ENCODE measurements at regions of chr14 and their contacts with region 1.

Region 1: GRCh38 chr14:89416002-89416995 is 734 bp downstream of the FOXN3 start:
- DNase-seq: peak; percentile 99
- H3K4me3 ChIP-seq: peak overlapping the region; percentile 88
- H3K4me3 Mint-ChIP-seq: peak overlapping the region; percentile 88
- H3K27ac Mint-ChIP-seq: peak overlapping the region; percentile 83
- H3K4me1 ChIP-seq: no peaks in the 10 kb centered on the region; the same call in 1 of the 2 replicates
- H3K4me1 Mint-ChIP-seq: peaks cover 18% of the 10 kb centered on the region
- H3K27me3 ChIP-seq: no peaks in the 10 kb centered on the region
- H3K27me3 Mint-ChIP-seq: no peaks in the 10 kb centered on the region
- CTCF ChIP-seq: no peak

Region 2: DNA sequence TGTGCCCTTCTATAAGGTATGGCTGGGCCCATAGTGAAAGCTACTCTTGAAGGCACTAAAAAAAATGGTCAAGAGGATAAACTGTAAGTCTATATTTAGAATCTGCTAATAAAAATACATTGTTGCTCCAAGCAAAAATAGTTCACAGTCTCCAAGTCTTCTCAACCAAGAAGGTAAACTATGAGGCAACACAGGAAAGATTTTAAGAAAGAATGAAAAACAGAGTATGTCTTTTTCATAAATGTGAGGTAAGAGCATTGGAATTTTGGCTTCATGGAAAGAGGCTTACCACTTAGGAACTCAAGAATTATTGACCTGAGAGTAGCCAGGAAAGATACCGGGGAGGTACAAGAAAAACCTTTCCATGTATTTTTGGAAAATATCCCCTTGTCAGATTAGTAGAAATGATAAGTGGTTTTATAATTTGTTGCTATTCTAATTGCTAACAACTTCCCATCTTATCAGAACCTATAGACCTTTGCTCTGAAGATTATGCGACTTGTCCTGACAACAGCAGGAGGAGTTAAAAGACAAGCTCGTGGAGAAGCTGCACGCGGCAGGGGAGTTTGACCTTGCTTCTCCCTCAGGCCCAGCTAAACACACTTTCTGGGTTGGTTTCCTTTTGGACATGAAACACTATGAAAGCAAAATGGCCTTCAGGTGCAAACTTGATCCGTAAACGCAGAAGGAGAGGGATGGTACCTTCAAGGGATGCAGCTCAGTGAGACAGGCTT is 237.3 kb before region 1 on chr14:
- CTCF ChIA-PET with region 1: no interaction called
- POLR2A ChIA-PET with region 1: interaction called, 3 read pairs
- intact Hi-C with region 1: loop called (anchors 1 kb)
- DNase-seq: no peak
- H3K4me3 ChIP-seq: no peak overlapping the region
- H3K4me3 Mint-ChIP-seq: no peak overlapping the region
- H3K27ac Mint-ChIP-seq: no peak overlapping the region
- H3K4me1 ChIP-seq: peaks cover 5% of the 10 kb centered on the region
- H3K4me1 Mint-ChIP-seq: no peaks in the 10 kb centered on the region
- H3K27me3 ChIP-seq: no peaks in the 10 kb centered on the region
- H3K27me3 Mint-ChIP-seq: no peaks in the 10 kb centered on the region
- CTCF ChIP-seq: no peak

Region 3: DNA sequence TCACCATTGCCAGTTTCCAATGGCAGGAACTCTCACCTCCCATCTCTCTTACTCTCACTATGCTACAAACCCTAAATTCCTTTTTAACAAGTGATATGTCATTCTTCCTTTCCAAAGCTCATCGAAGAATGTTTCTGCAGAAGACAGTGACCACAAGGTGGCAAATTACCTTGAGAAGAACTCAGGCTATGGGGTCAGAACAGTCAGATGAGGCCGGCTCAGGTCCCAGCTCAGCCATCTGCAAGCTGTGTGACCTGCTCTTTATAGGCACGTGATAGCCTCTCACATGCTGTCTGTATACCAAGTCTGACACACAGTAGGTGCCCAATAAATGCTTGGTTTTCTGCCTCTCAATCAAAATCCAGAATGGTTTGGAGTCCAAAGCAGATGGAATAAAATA is 80.0 kb before region 1 on chr14:
- CTCF ChIA-PET with region 1: interaction called, 3 read pairs
- POLR2A ChIA-PET with region 1: interaction called, 3 read pairs
- intact Hi-C with region 1: loop called (anchors 1 kb)
- DNase-seq: peak; percentile 39 to 46
- H3K4me3 ChIP-seq: no peak overlapping the region
- H3K4me3 Mint-ChIP-seq: no peak overlapping the region
- H3K27ac Mint-ChIP-seq: peak overlapping the region; percentile 79
- H3K4me1 ChIP-seq: peaks cover 47% of the 10 kb centered on the region
- H3K4me1 Mint-ChIP-seq: peaks cover 30% of the 10 kb centered on the region
- H3K27me3 ChIP-seq: no peaks in the 10 kb centered on the region
- H3K27me3 Mint-ChIP-seq: no peaks in the 10 kb centered on the region
- CTCF ChIP-seq: peak; percentile 19 to 20

Region 4: DNA sequence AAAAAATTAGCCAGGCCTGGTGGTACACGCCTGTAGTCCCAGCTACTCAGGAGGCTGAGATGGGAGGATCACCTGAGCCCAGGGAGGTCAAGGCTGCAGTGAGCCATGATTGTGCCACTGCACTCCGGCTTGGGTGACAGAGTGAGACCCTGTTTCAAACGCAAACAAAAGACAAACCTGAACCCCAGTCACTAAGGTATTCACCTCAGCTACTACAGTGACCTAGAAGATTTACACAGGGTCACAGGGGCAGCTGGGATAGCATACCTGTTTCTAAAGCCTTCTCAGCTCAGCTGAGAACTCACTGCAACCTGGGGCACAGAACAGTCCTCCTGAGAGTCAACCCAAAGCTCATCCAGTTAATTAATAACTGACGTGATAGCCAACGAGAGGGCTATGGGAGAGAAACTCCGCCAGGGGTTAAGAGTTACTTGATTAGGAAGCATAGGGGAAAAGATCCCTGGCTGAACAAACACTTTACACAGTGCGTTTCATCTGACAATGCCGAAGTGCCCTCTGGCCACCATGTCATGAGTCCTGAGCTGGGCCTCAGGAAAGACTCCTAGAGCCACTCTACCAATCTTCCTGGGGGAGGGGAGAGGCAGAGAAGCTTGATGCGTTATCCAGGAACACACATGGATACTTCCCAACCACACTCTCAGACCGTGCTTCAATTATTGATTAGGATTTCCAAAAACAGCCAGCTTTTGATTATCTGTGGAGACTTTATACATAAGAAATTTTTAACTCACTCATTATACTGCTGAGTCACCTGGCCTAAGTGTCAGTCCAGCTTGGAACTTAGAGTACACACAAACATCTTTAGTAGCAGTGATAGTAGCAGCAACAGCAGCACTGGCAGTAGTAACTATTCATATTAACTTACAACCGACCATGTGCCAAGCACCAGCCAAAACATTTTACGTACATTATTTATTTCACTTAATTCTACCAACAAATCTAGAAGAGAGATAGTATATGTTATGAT is 47.5 kb before region 1 on chr14:
- CTCF ChIA-PET with region 1: no interaction called
- POLR2A ChIA-PET with region 1: no interaction called
- intact Hi-C with region 1: loop called (anchors 1 kb)
- DNase-seq: peak; percentile 72 to 87
- H3K4me3 ChIP-seq: no peak overlapping the region
- H3K4me3 Mint-ChIP-seq: peak overlapping the region; percentile 53
- H3K27ac Mint-ChIP-seq: peak overlapping the region; percentile 71
- H3K4me1 ChIP-seq: peaks cover 24% of the 10 kb centered on the region
- H3K4me1 Mint-ChIP-seq: peaks cover 13% of the 10 kb centered on the region
- H3K27me3 ChIP-seq: no peaks in the 10 kb centered on the region
- H3K27me3 Mint-ChIP-seq: no peaks in the 10 kb centered on the region
- CTCF ChIP-seq: no peak

Region 5: DNA sequence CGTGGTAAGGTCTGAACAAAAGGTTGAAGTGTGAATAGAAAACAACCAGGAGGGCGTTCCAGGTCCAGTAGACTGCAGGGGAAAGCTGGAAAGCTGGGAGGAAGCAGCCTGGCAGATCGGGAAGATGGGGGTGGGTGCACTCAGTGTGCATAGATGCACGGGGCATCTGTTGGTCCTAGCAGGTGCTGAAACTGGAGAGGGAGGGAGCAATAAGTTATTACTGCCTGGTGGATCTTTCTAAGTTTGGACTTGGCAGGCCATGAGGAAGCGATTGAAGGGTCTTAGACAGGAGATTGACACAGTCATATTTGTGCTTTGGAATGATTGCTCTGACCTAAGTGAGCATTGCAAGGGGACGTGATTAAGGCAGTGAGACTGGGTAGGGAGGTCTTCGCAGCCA is 343.8 kb after region 1 on chr14:
- CTCF ChIA-PET with region 1: no interaction called
- POLR2A ChIA-PET with region 1: no interaction called
- intact Hi-C with region 1: loop called (anchors 5 kb)
- DNase-seq: no peak
- H3K4me3 ChIP-seq: no peak overlapping the region
- H3K4me3 Mint-ChIP-seq: no peak overlapping the region
- H3K27ac Mint-ChIP-seq: no peak overlapping the region
- H3K4me1 ChIP-seq: no peaks in the 10 kb centered on the region
- H3K4me1 Mint-ChIP-seq: no peaks in the 10 kb centered on the region
- H3K27me3 ChIP-seq: no peaks in the 10 kb centered on the region
- H3K27me3 Mint-ChIP-seq: peaks cover 5% of the 10 kb centered on the region
- CTCF ChIP-seq: no peak